Transverse colon (tissue), 4 donors: ENCODE measurements at regions of chr2 and their contacts with region 1.

Region 1: GRCh38 chr2:202178342-202178958 is 59.9 kb downstream of the SUMO1 start:
- DNase-seq: peak; percentile 47
- H3K4me3 ChIP-seq: no peak overlapping the region
- H3K27ac ChIP-seq: no peak overlapping the region
- H3K4me1 ChIP-seq: no peaks in the 10 kb centered on the region
- H3K27me3 ChIP-seq: no peaks in the 10 kb centered on the region
- CTCF ChIP-seq: peak; percentile 77 to 87 (median 84)
- EP300 ChIP-seq: no peak
- POLR2A ChIP-seq: no peak

Region 2: DNA sequence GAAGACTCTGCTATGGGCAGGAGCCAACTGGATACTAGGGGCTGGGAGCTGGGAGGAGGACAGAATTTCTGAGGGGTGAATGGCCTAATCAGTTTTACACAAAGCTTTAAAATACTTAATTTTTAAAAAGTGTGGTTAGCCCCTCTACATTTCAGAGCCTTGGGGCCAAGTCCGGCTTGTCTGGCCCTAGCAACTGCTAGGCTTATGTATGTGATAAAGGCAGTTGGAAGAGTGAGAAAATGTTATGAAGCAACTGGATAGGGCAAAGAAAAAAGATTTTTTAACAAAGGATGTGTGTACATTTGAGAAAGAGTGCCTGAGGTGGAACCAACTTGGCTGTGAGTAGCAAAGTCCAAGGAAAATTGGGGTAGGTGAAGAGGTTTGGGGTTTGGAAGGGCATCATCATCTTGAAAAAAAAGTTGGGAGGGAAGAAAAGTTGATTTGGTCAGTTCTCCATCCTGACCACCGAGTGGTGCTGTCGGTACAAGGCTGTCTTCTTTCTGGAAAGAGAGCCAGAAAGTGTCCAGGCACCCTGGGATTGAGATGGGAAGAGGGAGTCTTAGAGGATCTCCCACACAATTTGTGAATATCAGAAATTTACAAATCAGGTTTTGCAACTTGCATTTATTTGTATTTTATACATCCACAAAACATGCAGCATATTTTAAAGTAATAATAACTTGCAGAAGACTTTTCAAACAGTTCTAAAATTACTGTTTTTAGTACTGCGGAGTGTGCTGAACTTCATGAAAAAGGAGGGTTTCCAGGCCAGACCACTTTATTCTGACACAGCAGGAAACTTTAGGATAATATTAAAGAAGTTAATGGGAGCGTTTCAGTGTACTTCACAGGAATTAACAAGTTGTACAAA is 382.6 kb before region 1 on chr2:
- in situ Hi-C with region 1: no loop called
- intact Hi-C with region 1: loop called (anchors 5 kb)
- DNase-seq: no peak
- H3K4me3 ChIP-seq: no peak overlapping the region
- H3K27ac ChIP-seq: no peak overlapping the region
- H3K4me1 ChIP-seq: no peaks in the 10 kb centered on the region
- H3K27me3 ChIP-seq: no peaks in the 10 kb centered on the region
- CTCF ChIP-seq: peak; percentile 49 to 54 (median 52)
- EP300 ChIP-seq: no peak
- POLR2A ChIP-seq: no peak

Region 3: DNA sequence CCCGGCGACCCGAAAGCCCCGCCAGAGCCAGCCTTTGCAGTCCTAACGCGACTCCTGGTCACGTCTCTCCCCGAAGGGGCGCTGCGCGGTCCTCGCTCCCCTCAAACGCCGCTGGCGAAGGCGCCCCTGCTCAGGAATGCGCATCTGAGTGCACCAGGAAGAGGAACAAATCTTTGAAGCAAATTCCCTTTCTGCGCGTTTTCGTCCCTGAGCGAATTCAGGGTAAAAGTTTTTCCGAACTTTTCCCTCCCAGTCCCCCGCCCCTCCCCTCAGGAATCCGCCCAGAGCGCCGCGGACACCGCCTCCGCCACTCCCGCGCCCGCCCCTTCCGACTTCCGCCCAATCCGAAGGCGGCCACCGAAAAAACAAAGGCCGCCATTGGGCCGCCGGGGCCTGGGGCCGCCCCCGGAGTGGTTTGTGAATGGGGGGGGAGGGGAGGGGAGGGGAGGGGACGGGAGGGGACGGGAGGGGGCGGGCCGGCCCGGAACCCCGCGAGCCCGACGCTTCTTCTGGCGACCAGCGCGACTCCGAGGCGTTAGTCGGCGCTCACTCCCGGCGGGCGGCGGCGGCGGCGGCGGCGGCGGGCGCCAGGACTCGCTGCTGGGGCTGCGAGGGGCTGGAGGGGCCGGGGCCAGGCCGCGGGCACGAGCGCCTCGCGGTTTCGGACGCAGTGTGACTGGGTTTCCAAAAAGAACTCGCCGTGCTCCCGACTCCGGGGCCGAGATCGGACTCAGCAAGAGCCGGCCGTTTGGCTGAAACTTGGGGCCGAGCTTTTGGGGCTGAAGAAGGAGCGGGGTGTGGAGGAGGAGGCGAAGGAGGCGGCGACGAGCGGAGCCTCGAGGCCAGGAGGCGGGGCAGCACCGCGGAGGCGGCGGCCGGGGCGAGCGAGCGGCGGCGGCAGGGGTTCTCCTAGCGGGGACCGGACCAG is 144.9 kb before region 1 on chr2 and contains the start of gene FZD7:
- in situ Hi-C with region 1: no loop called
- intact Hi-C with region 1: loop called (anchors 2 kb)
- DNase-seq: peak; percentile 94
- H3K4me3 ChIP-seq: peak within 1 kb of the TSS; percentile 69 to 88 (median 80)
- H3K27ac ChIP-seq: peak within 1 kb of the TSS; percentile 91 to 99 (median 94)
- H3K4me1 ChIP-seq: peaks cover 5 to 29% (median 20%) of the 10 kb centered on the region in 4 donors
- H3K27me3 ChIP-seq: peaks cover 39% of the 10 kb centered on the region
- CTCF ChIP-seq: peak in 4 of 5 experiments; percentile 0 to 17 (median 10)
- EP300 ChIP-seq: no peak
- POLR2A ChIP-seq: peak; percentile 29
- total RNA-seq, gene FZD7: 6.2 to 14.6 (median 13.3) TPM